ENCODE measurements at regions of chr22 and their contacts with region 1.

Region 1: GRCh38 chr22:46035742-46036557 is 59.0 kb upstream of the WNT7B start:
- DNase-seq: peak; percentile 100
- H3K4me3 Mint-ChIP-seq: peak overlapping the region; percentile 80
- H3K27ac Mint-ChIP-seq: peak overlapping the region; percentile 95
- H3K4me1 Mint-ChIP-seq: peaks cover 24% of the 10 kb centered on the region
- H3K27me3 Mint-ChIP-seq: peaks cover 11% of the 10 kb centered on the region

Region 2: GRCh38 chr22:46013460-46014416 is 22.2 kb before region 1 on chr22:
- CTCF ChIA-PET with region 1: interaction called, 23 read pairs
- DNase-seq: peak; percentile 83
- H3K4me3 Mint-ChIP-seq: peak overlapping the region; percentile 82
- H3K27ac Mint-ChIP-seq: peak overlapping the region; percentile 62
- H3K4me1 Mint-ChIP-seq: peaks cover 17% of the 10 kb centered on the region
- H3K27me3 Mint-ChIP-seq: peaks cover 28% of the 10 kb centered on the region

Region 3: DNA sequence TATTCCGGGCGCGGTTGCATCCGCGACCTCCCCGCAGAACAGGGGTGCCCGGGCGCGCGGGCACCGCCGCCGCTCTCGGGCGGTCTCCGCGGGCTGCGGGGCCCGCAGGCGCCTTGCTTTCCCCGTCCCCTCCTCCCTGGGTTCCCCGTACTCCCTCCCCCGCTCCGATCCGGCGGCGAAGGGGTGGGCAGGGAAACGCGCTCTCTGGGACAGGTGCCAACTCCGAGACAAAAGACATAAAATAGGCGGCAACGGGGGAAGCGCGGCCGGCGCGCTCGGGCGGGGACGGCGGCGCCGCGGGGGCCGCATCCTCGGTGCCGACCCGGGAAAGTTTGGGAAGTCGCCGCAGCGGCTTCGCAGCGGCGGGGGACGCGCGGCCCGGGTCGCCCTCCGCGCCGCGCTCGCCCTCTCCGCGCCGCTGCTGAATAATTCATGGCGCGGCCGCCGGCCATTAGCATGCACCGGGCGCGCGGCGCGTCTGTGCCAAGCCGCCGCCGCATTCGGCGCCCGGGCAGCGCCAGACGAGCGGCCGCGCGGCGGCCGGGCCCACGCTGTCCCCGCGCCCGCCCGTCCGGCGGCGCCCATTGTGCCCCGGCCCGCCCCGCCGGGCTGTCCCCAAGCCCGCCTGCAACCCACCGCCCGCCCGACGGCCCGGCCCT is 35.6 kb after region 1 on chr22:
- CTCF ChIA-PET with region 1: interaction called, 11 read pairs
- DNase-seq: peak; percentile 69
- H3K4me3 Mint-ChIP-seq: peak overlapping the region; percentile 86
- H3K27ac Mint-ChIP-seq: peak overlapping the region; percentile 94
- H3K4me1 Mint-ChIP-seq: peaks cover 59% of the 10 kb centered on the region
- H3K27me3 Mint-ChIP-seq: peaks cover 17% of the 10 kb centered on the region

Region 4: DNA sequence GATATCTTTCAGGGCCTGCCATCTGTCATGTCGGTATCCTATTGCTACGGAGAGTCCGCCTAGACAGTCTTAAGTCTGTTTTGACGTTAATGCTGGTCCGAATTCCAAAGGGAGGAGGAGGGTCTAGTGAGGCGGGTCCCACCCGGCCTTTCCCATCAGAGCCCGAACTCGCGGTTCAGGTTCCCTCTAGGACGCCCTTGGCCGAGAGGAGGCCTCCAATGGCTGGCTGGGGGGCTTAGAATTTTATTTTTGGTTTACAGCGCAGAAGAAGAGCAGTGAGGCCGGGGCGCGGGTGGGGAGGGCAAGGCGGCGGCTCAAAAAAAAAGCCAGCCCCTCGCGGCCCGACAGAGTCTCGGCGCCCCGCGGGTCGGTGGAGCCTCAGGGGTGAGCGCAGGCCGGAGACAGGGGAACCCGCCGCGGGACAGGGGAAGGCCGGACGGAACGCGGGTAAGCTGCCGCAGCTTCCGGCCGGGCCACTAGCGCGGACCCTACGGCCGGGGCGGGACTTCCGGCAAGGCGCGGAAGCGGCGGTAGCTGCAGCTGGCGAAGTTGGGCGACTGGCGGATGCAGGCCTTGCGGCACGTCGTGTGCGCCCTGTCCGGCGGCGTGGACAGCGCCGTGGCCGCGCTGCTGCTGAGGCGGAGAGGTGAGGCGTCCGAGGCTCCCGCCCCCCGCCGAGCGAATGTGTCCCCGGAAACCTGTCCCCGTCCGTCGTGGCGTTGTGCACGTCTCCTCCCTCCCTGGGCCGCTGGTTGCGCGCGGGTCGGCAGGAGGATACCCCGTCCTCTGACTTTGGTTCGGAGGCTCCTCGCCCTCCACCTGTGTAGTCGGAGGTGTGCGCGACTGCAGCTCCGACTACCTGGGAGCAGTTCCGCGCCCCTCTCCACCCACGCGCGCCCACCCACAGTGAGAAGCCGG is 299.5 kb after region 1 on chr22 and contains the start of gene TRMU:
- CTCF ChIA-PET with region 1: no interaction called
- DNase-seq: peak; percentile 82
- H3K4me3 Mint-ChIP-seq: peak within 1 kb of the TSS; percentile 97
- H3K27ac Mint-ChIP-seq: peak within 1 kb of the TSS; percentile 93
- H3K4me1 Mint-ChIP-seq: peaks cover 35% of the 10 kb centered on the region
- H3K27me3 Mint-ChIP-seq: no peaks in the 10 kb centered on the region

Measured in activated naive CD4-positive, alpha-beta T cell treated with anti-CD3 and anti-CD28 coated beads, Interleukin-2, amount 10 ng/mL, durations not matched to agents 7 days and 5 days (primary cell).